ENCODE measurements at regions of chr16 and their contacts with region 1.

Region 1: GRCh38 chr16:50665128-50665878 is 15.8 kb downstream of the SNX20 start:
- DNase-seq: peak; percentile 88 to 94
- ATAC-seq: peak; percentile 89
- H3K4me3 ChIP-seq: no peak overlapping the region
- H3K27ac ChIP-seq: no peak overlapping the region
- H3K4me1 ChIP-seq: no peaks in the 10 kb centered on the region
- H3K27me3 ChIP-seq: no peaks in the 10 kb centered on the region

Region 2: GRCh38 chr16:50024684-50025536 is 640.4 kb before region 1 on chr16 and contains the start of gene CNEP1R1:
- intact Hi-C with region 1: loop called (anchors 5 to 10 kb)
- DNase-seq: peak; percentile 96 to 97
- ATAC-seq: peak; percentile 100
- H3K4me3 ChIP-seq: peak within 1 kb of the TSS; percentile 71 to 92
- H3K27ac ChIP-seq: peak within 1 kb of the TSS in 1 of 2 donors; percentile 20
- H3K4me1 ChIP-seq: no peaks in the 10 kb centered on the region
- H3K27me3 ChIP-seq: no peaks in the 10 kb centered on the region
- total RNA-seq, gene CNEP1R1: 25.0 to 25.3 TPM

Region 3: DNA sequence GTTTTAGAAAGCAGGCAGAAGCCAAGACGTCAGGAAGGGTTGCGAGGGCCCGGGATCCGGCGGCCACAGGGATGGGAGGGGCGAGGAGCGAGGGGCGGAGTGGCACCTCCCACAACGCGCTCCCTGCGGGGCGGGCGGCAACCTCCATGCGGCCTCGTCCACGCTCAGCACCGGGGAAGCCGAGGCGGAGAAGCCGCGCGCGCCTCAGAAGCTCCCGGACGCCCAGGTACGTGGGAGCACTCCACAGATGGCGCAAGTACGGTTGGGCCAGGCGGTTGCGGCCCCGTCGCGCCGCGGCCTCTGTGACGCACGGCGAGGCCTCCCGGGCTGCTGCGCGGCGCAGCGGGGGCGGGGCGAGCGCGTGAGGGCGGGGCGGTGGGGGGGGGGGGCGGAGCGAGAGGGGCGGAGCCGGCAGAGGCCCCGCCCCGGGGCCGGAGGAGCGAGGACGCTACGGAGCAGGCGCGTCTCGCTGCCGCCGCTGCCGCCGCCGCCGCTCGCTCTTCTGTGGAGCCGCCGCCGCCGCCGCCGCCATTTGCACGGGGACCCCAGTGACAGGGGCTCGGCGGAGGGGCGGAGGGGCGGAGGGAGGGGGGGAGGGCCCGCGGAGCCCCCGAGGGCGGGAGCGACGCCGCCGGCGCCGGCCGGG is 512.4 kb before region 1 on chr16 and contains the start of gene TENT4B:
- intact Hi-C with region 1: loop called (anchors 10 kb)
- DNase-seq: peak; percentile 93 to 96
- ATAC-seq: peak; percentile 95
- H3K4me3 ChIP-seq: peak within 1 kb of the TSS; percentile 78 to 99
- H3K27ac ChIP-seq: peak within 1 kb of the TSS in 1 of 2 donors; percentile 91
- H3K4me1 ChIP-seq: no peaks in the 10 kb centered on the region
- H3K27me3 ChIP-seq: no peaks in the 10 kb centered on the region
- total RNA-seq, gene TENT4B: 13.2 to 13.9 TPM

Region 4: GRCh38 chr16:50210266-50211038 is 454.9 kb before region 1 on chr16:
- intact Hi-C with region 1: loop called (anchors 5 to 10 kb)
- DNase-seq: peak; percentile 87 to 89
- ATAC-seq: peak; percentile 89
- H3K4me3 ChIP-seq: no peak overlapping the region
- H3K27ac ChIP-seq: peak overlapping the region in 1 of 2 donors; percentile 32
- H3K4me1 ChIP-seq: peaks cover 0 to 3% of the 10 kb centered on the region in 2 donors
- H3K27me3 ChIP-seq: no peaks in the 10 kb centered on the region

Region 5: DNA sequence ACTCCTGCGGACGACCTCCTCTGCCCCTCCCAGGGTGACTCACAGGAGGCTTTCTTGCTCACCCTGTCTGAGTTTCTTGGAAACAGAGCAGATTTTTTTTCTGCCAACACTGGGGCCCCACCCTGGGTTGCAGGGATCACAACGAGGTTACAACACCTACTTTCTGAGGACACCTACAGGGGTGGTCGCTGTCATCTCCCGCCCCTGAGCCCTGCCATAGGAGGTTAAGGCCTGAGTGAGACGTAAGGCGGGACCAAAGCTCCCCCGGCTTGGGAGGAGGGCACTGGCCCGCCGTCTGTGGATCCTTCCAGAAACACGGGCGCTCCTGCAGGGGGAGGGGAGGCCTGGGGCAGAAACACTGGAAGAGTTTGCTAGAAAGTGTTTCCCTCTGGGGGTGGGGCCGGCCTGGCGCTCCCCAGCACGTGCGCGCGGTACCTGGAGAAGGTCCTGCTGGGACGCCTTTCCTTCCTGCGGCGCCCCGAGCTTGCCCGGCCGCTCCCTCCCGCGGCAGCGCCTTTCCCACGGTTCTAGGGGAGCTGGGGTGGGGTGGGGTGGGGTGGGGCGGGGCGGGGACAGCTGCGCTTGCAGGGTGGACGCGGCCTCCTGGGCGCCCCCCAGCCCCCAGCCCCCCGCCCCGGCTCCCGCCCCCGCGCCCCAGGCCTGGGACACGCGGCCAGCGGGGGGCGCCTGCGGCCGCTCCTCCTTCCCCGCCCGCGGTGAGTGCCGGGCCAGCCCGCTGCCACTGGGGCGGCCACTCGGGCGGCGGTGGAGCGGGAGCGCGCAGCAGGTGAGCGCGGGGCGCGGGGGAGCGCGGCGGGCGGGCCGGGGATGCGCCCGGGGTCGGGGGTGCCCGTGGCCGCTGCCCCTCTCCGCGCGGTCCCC is 419.6 kb before region 1 on chr16:
- intact Hi-C with region 1: loop called (anchors 10 kb)
- DNase-seq: peak; percentile 68 to 86
- ATAC-seq: peak; percentile 57
- H3K4me3 ChIP-seq: peak overlapping the region; percentile 70 to 90
- H3K27ac ChIP-seq: no peak overlapping the region
- H3K4me1 ChIP-seq: no peaks in the 10 kb centered on the region
- H3K27me3 ChIP-seq: no peaks in the 10 kb centered on the region

Region 6: GRCh38 chr16:50338371-50339231 is 326.7 kb before region 1 on chr16:
- intact Hi-C with region 1: no loop called
- DNase-seq: no peak
- ATAC-seq: no peak
- H3K4me3 ChIP-seq: no peak overlapping the region
- H3K27ac ChIP-seq: peak overlapping the region in 1 of 2 donors; percentile 68
- H3K4me1 ChIP-seq: peaks cover 3 to 12% of the 10 kb centered on the region in 2 donors
- H3K27me3 ChIP-seq: no peaks in the 10 kb centered on the region

Region 7: DNA sequence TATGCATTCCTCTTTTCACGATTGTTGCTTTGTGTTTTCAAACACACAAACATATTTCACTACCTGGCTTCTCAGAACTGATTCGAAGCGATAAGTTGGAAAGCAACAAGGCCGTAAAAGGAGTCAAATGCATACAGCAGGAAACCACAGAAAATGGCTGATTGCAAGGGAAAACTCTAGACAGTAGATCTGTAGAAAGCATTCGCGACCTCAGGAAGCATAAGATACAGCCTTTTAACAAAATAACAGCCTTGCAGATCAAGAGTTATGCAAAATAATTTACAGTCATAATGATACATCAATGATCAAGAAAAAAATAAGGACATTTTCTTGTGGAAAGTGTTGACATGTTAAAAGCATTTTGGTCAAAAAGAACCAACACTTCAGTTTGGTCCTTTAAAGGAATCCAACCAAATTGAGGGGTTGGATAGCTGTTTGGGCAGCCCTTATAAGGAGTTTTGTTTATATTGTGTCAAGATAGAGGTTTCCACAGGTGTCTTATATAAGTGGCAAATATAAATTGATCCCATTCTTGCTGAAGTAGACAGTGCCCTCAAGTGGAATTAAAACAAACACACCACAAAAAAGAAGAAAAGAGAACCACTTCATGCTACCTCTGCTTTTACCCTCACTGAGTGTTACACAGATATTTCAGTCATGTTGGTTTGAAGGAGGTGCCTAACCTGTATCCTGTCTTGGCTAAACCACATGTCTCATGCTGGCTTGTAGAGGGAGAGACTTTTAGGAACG is 82.1 kb after region 1 on chr16:
- intact Hi-C with region 1: no loop called
- DNase-seq: no peak
- ATAC-seq: no peak
- H3K4me3 ChIP-seq: no peak overlapping the region
- H3K27ac ChIP-seq: no peak overlapping the region
- H3K4me1 ChIP-seq: peaks cover 2 to 5% of the 10 kb centered on the region in 2 donors
- H3K27me3 ChIP-seq: no peaks in the 10 kb centered on the region

Region 8: DNA sequence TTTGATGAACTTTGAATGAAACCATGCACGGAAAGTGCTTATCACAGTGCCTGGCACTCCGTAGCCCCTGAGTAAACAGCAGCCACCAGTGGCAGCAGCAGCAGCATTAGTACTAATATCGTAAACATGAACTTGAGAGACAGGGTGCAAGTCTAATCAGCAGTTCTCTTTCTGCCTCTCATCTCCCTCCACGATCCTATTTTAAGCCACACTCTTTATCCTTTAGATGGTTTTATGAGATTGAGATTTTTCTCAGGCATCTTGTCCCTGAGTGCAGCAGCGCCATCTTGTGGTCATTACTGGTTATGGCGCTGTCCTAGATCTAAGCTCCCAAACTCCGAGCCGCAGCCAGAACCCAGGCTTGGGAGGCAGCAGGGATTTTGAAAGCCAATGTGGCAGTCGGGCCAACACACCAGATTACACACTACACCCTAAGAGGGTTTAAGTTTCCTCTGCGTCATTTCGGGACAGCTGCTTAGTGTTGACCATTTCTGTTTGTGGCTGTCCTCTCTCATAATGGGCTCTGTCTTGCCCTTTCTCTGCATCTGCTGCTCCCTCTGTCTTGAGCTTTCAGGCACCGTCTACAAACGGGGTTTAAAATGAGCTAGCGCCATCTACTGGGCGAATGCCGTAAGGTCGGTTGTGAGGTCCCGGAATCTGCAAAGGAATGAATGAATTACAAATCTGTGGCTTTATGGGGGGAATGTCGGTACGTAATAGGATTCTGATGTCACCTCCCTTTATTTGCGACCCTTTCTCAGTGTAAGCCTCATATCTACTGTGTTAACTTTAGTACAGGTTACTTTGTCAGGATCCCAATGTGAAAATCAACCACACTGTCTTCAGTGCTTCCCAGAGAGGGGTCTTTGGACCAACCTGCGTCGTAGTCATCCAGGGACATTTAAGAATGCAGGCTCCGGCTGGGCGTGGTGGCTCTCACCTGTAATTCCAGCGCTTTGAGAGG is 141.1 kb after region 1 on chr16:
- intact Hi-C with region 1: loop called (anchors 5 to 10 kb)
- DNase-seq: peak; percentile 86 to 89
- ATAC-seq: peak; percentile 95
- H3K4me3 ChIP-seq: no peak overlapping the region
- H3K27ac ChIP-seq: no peak overlapping the region
- H3K4me1 ChIP-seq: no peaks in the 10 kb centered on the region
- H3K27me3 ChIP-seq: no peaks in the 10 kb centered on the region